Mammary epithelial cell (primary cell): ENCODE measurements at regions of chr22 and their contacts with region 1.

Region 1: GRCh38 chr22:44363272-44363979 is 50.7 kb upstream of the SHISAL1 start:
- DNase-seq: peak; percentile 89
- H3K4me3 ChIP-seq: peak overlapping the region in 1 of 3 experiments; percentile 29
- H3K27ac ChIP-seq: peak overlapping the region; percentile 80
- H3K4me1 ChIP-seq: peaks cover 52% of the 10 kb centered on the region
- H3K27me3 ChIP-seq: no peaks in the 10 kb centered on the region
- CTCF ChIP-seq: no peak

Region 2: GRCh38 chr22:44309137-44309536 is 54.3 kb before region 1 on chr22:
- CTCF ChIA-PET with region 1: no interaction called
- dilution Hi-C with region 1: no loop called
- in situ Hi-C with region 1: no loop called
- intact Hi-C with region 1: loop called (anchors 2 kb)
- DNase-seq: peak; percentile 97
- H3K4me3 ChIP-seq: no peak overlapping the region
- H3K27ac ChIP-seq: peak overlapping the region; percentile 12
- H3K4me1 ChIP-seq: peaks cover 24% of the 10 kb centered on the region
- H3K27me3 ChIP-seq: no peaks in the 10 kb centered on the region
- CTCF ChIP-seq: no peak

Region 3: DNA sequence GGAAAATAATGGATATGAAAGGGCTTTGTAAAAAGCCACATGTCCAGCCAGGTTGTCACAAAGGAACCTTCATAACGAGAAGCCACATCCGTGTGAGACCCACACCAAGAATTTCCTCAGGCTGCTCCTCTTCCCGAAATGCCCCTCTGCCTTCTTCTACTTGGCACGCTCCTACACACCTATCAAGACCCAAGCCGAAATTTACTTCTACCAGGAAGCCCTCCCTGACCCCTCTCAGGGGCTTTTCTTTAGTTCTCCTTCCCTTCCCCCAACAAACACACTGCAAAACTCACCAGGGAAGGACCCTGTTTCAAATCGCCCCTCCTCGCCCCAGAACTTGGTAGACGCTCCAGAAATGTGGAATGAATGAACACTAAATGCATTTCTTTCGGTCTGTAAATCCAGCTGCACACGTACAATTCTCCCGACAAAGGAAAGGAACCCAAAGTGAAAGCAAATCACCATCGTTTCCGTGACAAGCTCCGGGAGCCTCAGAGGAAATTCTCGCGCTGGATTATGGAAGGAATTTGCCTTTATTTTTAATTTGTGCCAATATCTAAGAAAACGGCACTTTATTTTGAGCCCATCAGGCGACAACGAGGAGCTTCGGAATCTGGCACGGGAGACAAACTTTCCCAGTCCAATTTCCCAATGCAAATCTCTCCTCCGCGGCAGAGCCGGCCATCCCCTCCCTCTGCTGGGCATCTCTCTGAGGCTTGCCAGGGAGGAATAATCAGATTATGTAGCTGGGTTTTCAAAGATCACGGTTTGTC is 37.5 kb before region 1 on chr22:
- CTCF ChIA-PET with region 1: no interaction called
- dilution Hi-C with region 1: no loop called
- in situ Hi-C with region 1: no loop called
- intact Hi-C with region 1: loop called (anchors 2 kb)
- DNase-seq: peak; percentile 31
- H3K4me3 ChIP-seq: peak overlapping the region; percentile 47 to 68 (median 56)
- H3K27ac ChIP-seq: no peak overlapping the region
- H3K4me1 ChIP-seq: peaks cover 10% of the 10 kb centered on the region
- H3K27me3 ChIP-seq: no peaks in the 10 kb centered on the region
- CTCF ChIP-seq: peak; percentile 10 to 45

Region 4: DNA sequence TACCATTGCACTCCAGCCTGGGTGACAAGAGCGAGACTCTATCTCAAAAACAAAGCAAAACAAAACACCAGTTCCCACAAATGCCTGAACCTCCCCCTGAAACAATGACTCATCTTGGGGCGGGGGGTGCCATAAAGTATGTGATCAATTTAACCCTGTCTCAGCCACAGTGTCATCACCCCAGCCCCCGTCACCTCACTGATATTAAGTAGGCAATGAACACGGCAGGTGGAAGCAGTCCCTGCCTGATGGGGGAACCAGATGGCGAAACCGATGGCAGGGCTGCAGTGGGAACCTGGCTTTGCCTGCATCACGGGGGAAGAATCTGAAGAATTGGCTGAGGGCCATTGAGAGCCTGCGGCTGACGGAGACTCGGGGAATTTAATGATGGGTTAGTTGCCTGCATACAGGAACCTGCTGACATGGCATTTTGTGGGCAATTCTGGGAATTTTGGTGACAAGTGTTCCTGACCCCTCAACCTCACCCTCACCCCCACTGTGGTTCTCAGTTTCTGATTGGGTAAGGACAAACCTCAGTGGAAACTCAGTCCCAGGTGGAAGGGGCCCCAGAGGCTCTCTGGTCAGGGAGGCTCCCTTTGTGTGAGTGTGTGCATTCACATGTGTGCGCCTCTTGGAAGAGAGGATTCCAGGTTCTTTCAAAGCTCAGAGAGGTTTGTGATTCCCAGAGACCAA is 11.6 kb before region 1 on chr22:
- CTCF ChIA-PET with region 1: interaction called, 3 read pairs
- dilution Hi-C with region 1: no loop called
- in situ Hi-C with region 1: no loop called
- intact Hi-C with region 1: loop called (anchors 1 kb)
- DNase-seq: peak; percentile 92
- H3K4me3 ChIP-seq: no peak overlapping the region
- H3K27ac ChIP-seq: peak overlapping the region; percentile 4
- H3K4me1 ChIP-seq: peaks cover 17% of the 10 kb centered on the region
- H3K27me3 ChIP-seq: no peaks in the 10 kb centered on the region
- CTCF ChIP-seq: no peak

Region 5: DNA sequence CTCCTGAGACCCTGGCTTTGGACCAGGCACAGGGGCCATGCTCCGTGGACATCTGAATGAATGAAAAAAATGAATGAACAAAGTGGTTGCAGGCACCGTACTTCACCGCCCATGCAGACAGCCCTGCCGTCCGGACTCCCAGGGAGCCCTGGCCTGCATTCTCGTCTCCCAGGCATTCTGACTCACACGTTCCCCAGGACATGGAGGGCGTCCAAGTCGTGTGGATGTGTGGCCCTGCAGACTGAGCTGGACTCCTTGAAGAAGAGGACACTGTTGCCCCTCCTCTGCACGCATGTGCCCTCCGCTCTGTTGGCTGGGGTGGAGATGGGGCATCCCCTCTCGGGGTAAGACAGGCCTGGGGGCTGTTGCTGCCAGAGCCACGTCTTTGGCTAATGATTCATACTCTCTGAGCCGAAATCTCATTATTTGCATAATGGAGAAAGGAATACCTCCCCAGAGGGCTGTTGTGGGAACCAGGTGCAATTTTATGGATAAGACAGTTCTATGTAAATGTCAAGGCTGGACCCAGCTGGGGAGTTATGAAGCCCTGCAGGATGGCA is 84.9 kb after region 1 on chr22:
- CTCF ChIA-PET with region 1: no interaction called
- dilution Hi-C with region 1: no loop called
- in situ Hi-C with region 1: no loop called
- intact Hi-C with region 1: loop called (anchors 2 kb)
- DNase-seq: peak; percentile 88
- H3K4me3 ChIP-seq: no peak overlapping the region
- H3K27ac ChIP-seq: peak overlapping the region; percentile 60
- H3K4me1 ChIP-seq: peaks cover 23% of the 10 kb centered on the region
- H3K27me3 ChIP-seq: no peaks in the 10 kb centered on the region
- CTCF ChIP-seq: no peak

Region 6: DNA sequence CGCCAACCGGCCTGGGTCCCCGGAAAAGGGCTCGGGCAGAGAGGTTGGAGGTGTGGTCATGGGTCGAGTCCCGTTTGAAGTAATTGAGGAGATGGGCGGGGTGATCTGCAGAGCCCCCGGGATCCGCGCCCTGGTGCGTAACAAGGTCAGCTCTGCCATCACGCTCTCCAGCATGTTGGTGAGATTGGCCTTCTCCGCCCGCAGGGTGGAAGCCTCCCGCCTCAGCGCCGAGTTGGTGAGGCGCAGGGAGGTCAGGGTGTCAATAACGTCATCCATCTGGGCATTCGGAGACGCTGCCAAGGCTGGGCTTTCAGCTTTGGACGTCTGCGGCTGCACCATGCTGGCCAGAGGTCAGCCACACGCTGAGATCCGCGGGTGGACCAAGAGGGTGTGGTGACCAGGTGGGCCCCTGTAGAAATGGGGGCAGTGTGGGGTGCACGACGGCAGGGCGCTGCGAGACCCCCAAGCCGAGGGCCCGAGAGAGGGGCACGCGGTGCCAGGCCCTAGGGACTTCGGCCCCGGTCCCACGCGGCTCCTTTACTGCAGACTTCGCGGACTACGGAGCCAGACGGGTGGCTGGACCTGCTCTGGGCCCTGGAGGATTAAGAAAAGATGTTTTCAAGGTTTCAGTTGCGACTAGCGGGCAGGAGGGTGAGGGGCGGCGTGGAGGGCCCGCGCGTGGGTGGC is 133.9 kb after region 1 on chr22:
- CTCF ChIA-PET with region 1: no interaction called
- dilution Hi-C with region 1: no loop called
- in situ Hi-C with region 1: no loop called
- intact Hi-C with region 1: loop called (anchors 2 kb)
- DNase-seq: peak; percentile 3
- H3K4me3 ChIP-seq: peak overlapping the region; percentile 62 to 80 (median 72)
- H3K27ac ChIP-seq: peak overlapping the region; percentile 76
- H3K4me1 ChIP-seq: peaks cover 10% of the 10 kb centered on the region
- H3K27me3 ChIP-seq: no peaks in the 10 kb centered on the region
- CTCF ChIP-seq: no peak